ENCODE measurements at regions of chr18 and their contacts with region 1.

Region 1: GRCh38 chr18:13823707-13824395 is at the start of gene MC5R:
- DNase-seq: peak; percentile 73
- H3K4me3 ChIP-seq: peak within 1 kb of the TSS; percentile 36 to 44
- H3K27ac ChIP-seq: no peak within 1 kb of the TSS
- H3K4me1 ChIP-seq: no peaks in the 10 kb centered on the region
- H3K27me3 ChIP-seq: no peaks in the 10 kb centered on the region
- CTCF ChIP-seq: peak; percentile 85 to 90 (median 86)
- POLR2A ChIP-seq: no peak
- total RNA-seq, gene MC5R: 0.31 to 0.74 TPM

Region 2: GRCh38 chr18:14086458-14087231 is 262.8 kb after region 1 on chr18:
- intact Hi-C with region 1: loop called (anchors 10 kb)
- DNase-seq: peak; percentile 26
- H3K4me3 ChIP-seq: no peak overlapping the region
- H3K27ac ChIP-seq: no peak overlapping the region
- H3K4me1 ChIP-seq: no peaks in the 10 kb centered on the region
- H3K27me3 ChIP-seq: no peaks in the 10 kb centered on the region
- CTCF ChIP-seq: peak; percentile 42 to 55 (median 42)
- POLR2A ChIP-seq: no peak